ENCODE measurements at regions of chr18 and their contacts with region 1.

Region 1: GRCh38 chr18:55265984-55266383 is 306.7 kb upstream of the CCDC68 start:
- H3K4me3 Mint-ChIP-seq: no peak overlapping the region
- H3K27ac Mint-ChIP-seq: peak overlapping the region; percentile 95
- H3K4me1 Mint-ChIP-seq: peaks cover 52% of the 10 kb centered on the region
- H3K27me3 Mint-ChIP-seq: no peaks in the 10 kb centered on the region

Region 2: DNA sequence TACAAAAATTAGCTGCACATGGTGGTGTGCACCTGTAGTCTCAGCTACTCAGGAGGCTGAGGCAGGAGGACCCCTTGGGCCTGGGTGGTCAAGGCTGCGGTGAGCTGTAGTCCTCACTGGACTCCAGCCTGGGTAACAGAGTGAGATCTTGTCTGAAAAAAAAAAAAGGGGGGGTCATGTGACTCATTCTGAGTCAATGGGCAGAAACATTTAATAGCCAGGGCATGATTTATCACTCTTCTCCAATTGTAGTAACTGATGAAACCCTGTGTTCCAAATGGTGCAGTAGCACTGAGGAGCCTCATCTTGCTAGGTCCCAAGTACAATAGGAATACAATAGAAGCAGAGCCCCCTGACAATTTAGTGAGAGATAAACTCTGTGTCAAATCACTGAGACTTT is 227.8 kb before region 1 on chr18:
- intact Hi-C with region 1: no loop called
- H3K4me3 Mint-ChIP-seq: no peak overlapping the region
- H3K27ac Mint-ChIP-seq: no peak overlapping the region
- H3K4me1 Mint-ChIP-seq: no peaks in the 10 kb centered on the region
- H3K27me3 Mint-ChIP-seq: no peaks in the 10 kb centered on the region

Region 3: GRCh38 chr18:55322178-55322735 is 56.3 kb after region 1 on chr18:
- intact Hi-C with region 1: loop called (anchors 1 kb)
- H3K4me3 Mint-ChIP-seq: peak overlapping the region; percentile 94
- H3K27ac Mint-ChIP-seq: peak overlapping the region; percentile 83
- H3K4me1 Mint-ChIP-seq: peaks cover 23% of the 10 kb centered on the region
- H3K27me3 Mint-ChIP-seq: no peaks in the 10 kb centered on the region

Region 4: GRCh38 chr18:55452123-55452611 is 186.2 kb after region 1 on chr18:
- intact Hi-C with region 1: no loop called
- H3K4me3 Mint-ChIP-seq: no peak overlapping the region
- H3K27ac Mint-ChIP-seq: no peak overlapping the region
- H3K4me1 Mint-ChIP-seq: no peaks in the 10 kb centered on the region
- H3K27me3 Mint-ChIP-seq: no peaks in the 10 kb centered on the region

Measured in dendritic cell treated with granulocyte-macrophage colony-stimulating factor and Interleukin-4, amounts not matched to agents 40 ng/mL and 50 ng/mL, for 4 days (primary cell).